ENCODE measurements at regions of chr5 and their contacts with region 1.

Region 1: GRCh38 chr5:73633060-73633459 is 7.1 kb downstream of the ARHGEF28 start:
- DNase-seq: no peak
- ATAC-seq: peak; percentile 60
- H3K4me3 ChIP-seq: no peak overlapping the region
- H3K27ac ChIP-seq: no peak overlapping the region
- H3K4me1 ChIP-seq: no peaks in the 10 kb centered on the region
- H3K27me3 ChIP-seq: no peaks in the 10 kb centered on the region
- CTCF ChIP-seq: peak in 1 of 3 experiments; percentile 11; a peak in 1 of 6 replicates
- EP300 ChIP-seq: no peak
- POLR2A ChIP-seq: no peak
- RAD21 ChIP-seq: 0 out of 2 replicates have a peak, but pooled peaks have one; percentile 15

Region 2: GRCh38 chr5:73596705-73597328 is 36.2 kb before region 1 on chr5:
- CTCF ChIA-PET with region 1: interaction called, 15 read pairs
- POLR2A ChIA-PET with region 1: no interaction called
- RAD21 ChIA-PET with region 1: interaction called, 9 read pairs
- SMC1A ChIA-PET with region 1: interaction called, 13 read pairs
- in situ Hi-C with region 1: no loop called
- intact Hi-C with region 1: loop called (anchors 5 kb)
- DNase-seq: no peak
- ATAC-seq: peak; percentile 65
- H3K4me3 ChIP-seq: no peak overlapping the region
- H3K27ac ChIP-seq: no peak overlapping the region
- H3K4me1 ChIP-seq: no peaks in the 10 kb centered on the region
- H3K27me3 ChIP-seq: no peaks in the 10 kb centered on the region
- CTCF ChIP-seq: peak; percentile 29 to 61 (median 57)
- EP300 ChIP-seq: no peak
- POLR2A ChIP-seq: no peak
- RAD21 ChIP-seq: 0 out of 2 replicates have a peak, but pooled peaks have one; percentile 15